PC-3 (cell line): ENCODE measurements at regions of chr2 and their contacts with region 1.

Region 1: DNA sequence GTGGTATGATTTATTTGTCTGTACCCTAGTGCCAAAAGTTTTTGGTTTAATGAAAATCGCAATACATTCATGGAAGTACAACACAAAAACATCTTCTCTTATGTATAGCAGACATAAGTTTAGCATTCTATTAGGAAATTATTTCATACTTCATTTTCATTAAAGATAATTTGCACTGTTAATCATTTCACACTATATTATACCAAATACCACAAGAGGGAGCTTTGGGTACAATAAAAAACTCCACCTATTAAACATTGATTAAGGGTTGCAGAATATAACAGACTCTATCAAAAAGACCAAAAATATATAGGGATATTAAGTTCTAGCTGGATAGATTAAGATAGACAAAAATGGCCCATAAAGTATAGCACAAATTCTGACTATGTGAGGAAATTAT is 79.0 kb downstream of the SLC66A3 start:
- DNase-seq: peak; percentile 40
- ATAC-seq: peak; percentile 42
- H3K4me3 ChIP-seq: no peak overlapping the region
- H3K27ac ChIP-seq: no peak overlapping the region
- H3K4me1 ChIP-seq: no peaks in the 10 kb centered on the region
- H3K27me3 ChIP-seq: no peaks in the 10 kb centered on the region
- CTCF ChIP-seq: peak; percentile 84

Region 2: DNA sequence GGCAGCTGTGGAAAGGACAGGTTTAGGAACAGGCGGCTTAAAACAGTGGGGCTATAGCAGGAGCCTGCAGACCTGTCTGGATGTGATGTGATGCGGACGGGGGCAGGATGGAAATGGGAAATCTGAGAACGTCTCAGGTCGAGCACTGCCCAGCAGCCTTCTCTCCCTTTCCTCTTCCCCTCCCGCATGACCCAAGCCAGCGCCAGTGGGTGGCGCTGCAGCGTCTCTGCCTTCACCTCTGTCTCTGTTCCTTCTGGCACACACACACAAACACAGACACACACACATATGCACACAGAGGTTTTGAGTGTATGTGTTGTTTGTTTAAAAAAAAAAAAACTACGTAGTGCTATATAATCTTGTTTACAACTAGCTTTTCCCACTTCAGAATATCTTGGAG is 161.1 kb before region 1 on chr2:
- CTCF ChIA-PET with region 1: no interaction called
- POLR2A ChIA-PET with region 1: no interaction called
- intact Hi-C with region 1: no loop called
- DNase-seq: peak; percentile 46
- ATAC-seq: peak; percentile 27; the same call in 1 of the 2 replicates
- H3K4me3 ChIP-seq: no peak overlapping the region
- H3K27ac ChIP-seq: no peak overlapping the region
- H3K4me1 ChIP-seq: peaks cover 20% of the 10 kb centered on the region
- H3K27me3 ChIP-seq: no peaks in the 10 kb centered on the region
- CTCF ChIP-seq: peak; percentile 60

Region 3: DNA sequence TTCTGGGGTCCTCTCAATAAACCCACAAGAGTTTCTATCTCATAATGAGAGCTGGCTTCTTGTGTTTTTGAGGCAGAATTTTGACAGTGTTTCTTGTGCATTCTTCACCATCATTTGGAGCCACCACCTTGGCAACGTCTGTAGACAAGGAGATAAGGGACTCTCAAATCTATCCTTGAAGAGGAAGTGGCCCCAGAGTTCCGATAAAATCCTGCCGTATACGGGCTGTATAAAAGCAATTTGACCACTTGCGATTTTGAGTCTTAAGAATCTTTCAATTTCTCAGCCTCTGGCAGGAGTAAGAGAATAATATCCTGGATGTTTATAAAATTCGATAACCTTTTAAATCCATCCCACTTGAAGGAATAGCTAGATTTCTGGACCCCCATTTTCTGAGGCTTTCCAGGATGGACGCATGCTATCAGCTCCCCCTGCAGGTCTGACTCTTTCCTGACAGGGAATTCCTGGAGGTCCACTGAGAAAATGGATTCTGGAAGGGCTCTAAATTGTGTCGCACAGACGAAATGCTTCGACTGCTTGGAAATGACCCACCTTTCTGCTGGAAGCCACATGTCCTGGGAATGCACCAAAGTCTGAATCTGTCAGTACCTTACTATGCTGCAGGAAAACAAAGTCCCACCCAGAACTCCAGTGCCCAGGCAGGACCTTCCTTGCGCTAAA is 177.6 kb after region 1 on chr2:
- CTCF ChIA-PET with region 1: interaction called, 4 read pairs
- POLR2A ChIA-PET with region 1: no interaction called
- intact Hi-C with region 1: loop called (anchors 1 kb)
- DNase-seq: peak; percentile 71
- ATAC-seq: peak; percentile 55
- H3K4me3 ChIP-seq: peak overlapping the region; percentile 60
- H3K27ac ChIP-seq: no peak overlapping the region
- H3K4me1 ChIP-seq: peaks cover 14% of the 10 kb centered on the region
- H3K27me3 ChIP-seq: no peaks in the 10 kb centered on the region
- CTCF ChIP-seq: peak; percentile 93

Region 4: DNA sequence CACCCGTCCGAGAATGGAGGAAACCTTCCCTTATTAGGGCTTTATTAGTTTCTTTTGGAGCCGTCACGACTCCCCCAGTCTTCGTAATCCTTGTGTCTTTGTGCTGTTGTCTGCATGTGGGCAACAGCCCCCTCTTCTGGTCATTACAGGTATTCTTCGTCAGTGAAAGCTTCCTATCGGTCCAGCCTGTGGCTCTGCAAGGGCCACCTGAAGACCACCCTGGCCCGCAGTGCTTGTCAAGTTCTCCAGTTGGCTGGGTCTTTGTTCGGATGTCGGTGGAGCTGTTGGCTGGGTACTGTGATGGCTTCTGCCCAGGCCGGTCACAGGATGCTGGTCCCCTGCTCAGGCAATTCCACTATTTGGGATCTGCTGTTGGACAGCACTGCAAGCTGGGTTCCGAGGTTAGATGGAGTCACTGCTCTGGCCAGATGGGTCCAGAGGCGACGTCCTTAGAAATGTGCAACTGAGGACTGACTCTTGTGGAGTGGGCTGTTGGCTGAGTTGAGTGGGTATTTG is 212.5 kb after region 1 on chr2:
- CTCF ChIA-PET with region 1: interaction called, 3 read pairs
- POLR2A ChIA-PET with region 1: no interaction called
- intact Hi-C with region 1: loop called (anchors 2 kb)
- DNase-seq: peak; percentile 66
- ATAC-seq: peak; percentile 70
- H3K4me3 ChIP-seq: no peak overlapping the region
- H3K27ac ChIP-seq: no peak overlapping the region
- H3K4me1 ChIP-seq: no peaks in the 10 kb centered on the region
- H3K27me3 ChIP-seq: no peaks in the 10 kb centered on the region
- CTCF ChIP-seq: peak; percentile 93